ENCODE measurements at regions of chr13 and their contacts with region 1.

Region 1: GRCh38 chr13:40172149-40172591 is 494.3 kb downstream of the FOXO1 start:
- DNase-seq: no peak
- H3K4me3 ChIP-seq: no peak overlapping the region
- H3K27ac ChIP-seq: no peak overlapping the region
- H3K4me1 ChIP-seq: no peaks in the 10 kb centered on the region
- H3K27me3 ChIP-seq: no peaks in the 10 kb centered on the region
- CTCF ChIP-seq: no peak
- POLR2A ChIP-seq: no peak

Region 2: DNA sequence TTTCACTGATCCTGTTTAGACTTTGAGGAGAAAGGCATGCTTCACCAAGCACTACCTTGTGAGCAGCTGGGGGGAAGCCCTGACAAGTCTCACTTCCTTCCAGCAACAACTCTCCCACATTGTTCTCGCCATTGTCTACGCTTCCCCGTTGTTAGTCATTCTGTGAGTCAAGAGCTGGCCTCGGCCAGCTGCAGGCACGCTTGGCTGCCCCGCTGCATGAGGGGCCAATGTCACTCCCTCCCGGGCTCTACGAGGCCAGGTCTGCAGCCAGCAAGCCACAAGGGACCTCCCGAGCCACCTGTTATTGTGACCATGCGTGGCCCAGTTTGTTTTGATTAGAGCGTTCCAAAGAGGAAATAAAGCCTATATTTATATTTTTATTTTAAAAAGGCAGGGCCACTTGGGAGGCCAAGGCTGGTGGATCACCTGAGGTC is 273.4 kb after region 1 on chr13:
- intact Hi-C with region 1: loop called in 1 of 2 experiments (anchors 10 kb)
- DNase-seq: peak; percentile 27 to 64 (median 33)
- H3K4me3 ChIP-seq: no peak overlapping the region
- H3K27ac ChIP-seq: no peak overlapping the region
- H3K4me1 ChIP-seq: peaks cover 4 to 9% of the 10 kb centered on the region in 2 donors
- H3K27me3 ChIP-seq: no peaks in the 10 kb centered on the region
- CTCF ChIP-seq: no peak
- POLR2A ChIP-seq: no peak

Measured in adrenal gland (tissue), 19 donors.